Dendritic cell treated with granulocyte-macrophage colony-stimulating factor and Interleukin-4, amounts not matched to agents 40 ng/mL and 50 ng/mL, for 4 days (primary cell): ENCODE measurements at regions of chr1 and their contacts with region 1.

Region 1: DNA sequence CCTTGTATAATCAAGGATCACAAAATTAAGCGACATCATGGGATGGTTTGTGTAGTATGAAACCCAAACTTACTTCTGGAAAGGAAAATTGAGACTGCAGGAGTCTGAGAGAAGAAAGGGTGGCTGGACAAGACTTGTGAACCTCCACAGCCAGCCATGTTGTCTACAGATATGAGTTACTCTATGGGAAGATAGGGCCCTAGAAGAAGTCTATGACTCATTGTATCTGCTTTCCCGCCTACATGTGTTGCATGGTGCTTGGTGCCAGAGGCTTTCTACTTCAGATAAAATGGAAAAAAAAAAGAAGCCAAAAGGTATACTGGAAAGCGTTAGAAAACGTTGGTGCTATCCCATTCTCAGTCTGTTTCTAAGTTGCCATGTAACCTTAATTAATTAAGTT is 18.7 kb upstream of the OR6N2 start:
- H3K4me3 Mint-ChIP-seq: no peak overlapping the region
- H3K27ac Mint-ChIP-seq: peak overlapping the region; percentile 91
- H3K4me1 Mint-ChIP-seq: peaks cover 84% of the 10 kb centered on the region
- H3K27me3 Mint-ChIP-seq: no peaks in the 10 kb centered on the region

Region 2: GRCh38 chr1:158819461-158820443 is 20.1 kb after region 1 on chr1:
- intact Hi-C with region 1: no loop called
- H3K4me3 Mint-ChIP-seq: no peak overlapping the region
- H3K27ac Mint-ChIP-seq: peak overlapping the region; percentile 82
- H3K4me1 Mint-ChIP-seq: peaks cover 52% of the 10 kb centered on the region
- H3K27me3 Mint-ChIP-seq: no peaks in the 10 kb centered on the region

Region 3: GRCh38 chr1:158836038-158836437 is 36.3 kb after region 1 on chr1:
- intact Hi-C with region 1: loop called (anchors 5 kb)
- H3K4me3 Mint-ChIP-seq: peak overlapping the region; percentile 50
- H3K27ac Mint-ChIP-seq: peak overlapping the region; percentile 86
- H3K4me1 Mint-ChIP-seq: peaks cover 55% of the 10 kb centered on the region
- H3K27me3 Mint-ChIP-seq: no peaks in the 10 kb centered on the region